ENCODE measurements at regions of chr3 and their contacts with region 1.

Region 1: GRCh38 chr3:185558395-185558794 is 6.0 kb upstream of the LIPH start:
- DNase-seq: peak; percentile 44 to 74 (median 59)
- ATAC-seq: peak; percentile 87
- H3K4me3 ChIP-seq: no peak overlapping the region
- H3K27ac ChIP-seq: peak overlapping the region; percentile 60
- H3K4me1 ChIP-seq: peaks cover 14 to 20% of the 10 kb centered on the region in 2 experiments; a peak in 3 of 5 replicates
- H3K27me3 ChIP-seq: no peaks in the 10 kb centered on the region
- CTCF ChIP-seq: no peak
- EP300 ChIP-seq: no peak
- POLR2A ChIP-seq: no peak
- RAD21 ChIP-seq: no peak

Region 2: DNA sequence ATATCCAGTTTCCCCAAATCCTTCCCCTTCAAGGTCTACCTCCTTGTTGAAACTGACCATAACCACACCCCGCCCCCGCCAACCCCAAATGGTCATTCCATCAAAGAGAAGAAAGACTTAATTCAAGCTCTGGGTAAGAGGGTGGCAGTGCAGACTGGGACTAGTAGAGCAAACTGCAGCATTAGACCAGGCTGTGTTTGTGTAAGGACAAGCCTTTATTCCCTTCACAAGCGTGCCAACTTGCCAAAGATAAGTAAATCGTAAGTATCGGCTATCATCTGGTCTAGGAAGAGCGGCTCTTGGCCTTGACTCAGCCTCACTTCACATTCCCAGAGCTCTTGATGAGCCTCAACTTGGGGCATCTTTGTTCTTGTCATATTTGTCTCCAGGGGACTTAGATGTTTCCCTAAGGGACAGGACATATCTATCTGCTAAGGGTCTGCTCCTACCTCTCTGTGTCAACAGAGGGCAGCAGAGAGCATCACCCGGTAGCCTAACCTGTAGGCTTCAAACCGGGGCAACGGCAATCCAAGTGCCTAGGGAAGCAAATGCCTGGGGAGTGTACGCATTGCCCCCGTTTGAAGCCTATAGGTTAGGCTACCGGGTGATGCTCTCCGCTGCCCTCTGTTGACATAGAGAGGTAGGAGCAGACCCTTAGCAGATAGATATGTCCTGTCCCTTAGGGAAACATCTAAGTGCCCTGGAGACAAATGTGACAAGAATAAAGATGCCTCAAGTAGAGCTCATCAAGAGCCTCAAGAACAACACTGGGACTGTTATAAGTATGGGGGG is 204.4 kb before region 1 on chr3:
- CTCF ChIA-PET with region 1: no interaction called
- POLR2A ChIA-PET with region 1: no interaction called
- in situ Hi-C with region 1: no loop called
- intact Hi-C with region 1: loop called (anchors 5 kb)
- DNase-seq: peak; percentile 68 to 87 (median 72)
- ATAC-seq: peak; percentile 99
- H3K4me3 ChIP-seq: no peak overlapping the region
- H3K27ac ChIP-seq: no peak overlapping the region
- H3K4me1 ChIP-seq: no peaks in the 10 kb centered on the region
- H3K27me3 ChIP-seq: peaks cover 0 to 5% of the 10 kb centered on the region in 2 experiments; a peak in 1 of 5 replicates
- CTCF ChIP-seq: peak; percentile 70 to 82 (median 76)
- EP300 ChIP-seq: no peak
- POLR2A ChIP-seq: no peak
- RAD21 ChIP-seq: peak; percentile 40 to 71

Measured in K562 (cell line).